ENCODE measurements at regions of chr5 and their contacts with region 1.

Region 1: DNA sequence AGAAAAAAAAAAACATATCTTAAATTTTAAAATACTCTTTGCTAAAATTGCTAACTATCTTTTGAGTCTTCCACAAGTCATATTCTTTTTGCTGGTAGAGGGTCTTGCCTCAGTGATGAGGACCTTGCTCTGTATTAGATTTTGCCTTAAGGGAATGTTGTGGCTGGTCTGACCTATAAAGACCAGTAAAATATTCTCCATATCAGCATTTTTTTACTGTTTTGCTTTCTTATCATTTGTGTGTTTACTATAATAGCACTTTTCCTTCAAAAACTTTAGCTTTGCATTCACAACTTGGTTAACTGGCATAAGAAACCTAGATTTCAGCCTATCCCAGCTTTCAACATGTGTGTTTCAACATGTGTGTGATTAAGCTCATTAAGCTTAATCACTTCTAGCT is 224.7 kb upstream of the CDH18 start:
- DNase-seq: no peak
- ATAC-seq: no peak
- H3K4me3 ChIP-seq: no peak overlapping the region
- H3K27ac ChIP-seq: no peak overlapping the region
- H3K4me1 ChIP-seq: no peaks in the 10 kb centered on the region
- H3K27me3 ChIP-seq: no peaks in the 10 kb centered on the region
- CTCF ChIP-seq: no peak
- POLR2A ChIP-seq: no peak

Region 2: DNA sequence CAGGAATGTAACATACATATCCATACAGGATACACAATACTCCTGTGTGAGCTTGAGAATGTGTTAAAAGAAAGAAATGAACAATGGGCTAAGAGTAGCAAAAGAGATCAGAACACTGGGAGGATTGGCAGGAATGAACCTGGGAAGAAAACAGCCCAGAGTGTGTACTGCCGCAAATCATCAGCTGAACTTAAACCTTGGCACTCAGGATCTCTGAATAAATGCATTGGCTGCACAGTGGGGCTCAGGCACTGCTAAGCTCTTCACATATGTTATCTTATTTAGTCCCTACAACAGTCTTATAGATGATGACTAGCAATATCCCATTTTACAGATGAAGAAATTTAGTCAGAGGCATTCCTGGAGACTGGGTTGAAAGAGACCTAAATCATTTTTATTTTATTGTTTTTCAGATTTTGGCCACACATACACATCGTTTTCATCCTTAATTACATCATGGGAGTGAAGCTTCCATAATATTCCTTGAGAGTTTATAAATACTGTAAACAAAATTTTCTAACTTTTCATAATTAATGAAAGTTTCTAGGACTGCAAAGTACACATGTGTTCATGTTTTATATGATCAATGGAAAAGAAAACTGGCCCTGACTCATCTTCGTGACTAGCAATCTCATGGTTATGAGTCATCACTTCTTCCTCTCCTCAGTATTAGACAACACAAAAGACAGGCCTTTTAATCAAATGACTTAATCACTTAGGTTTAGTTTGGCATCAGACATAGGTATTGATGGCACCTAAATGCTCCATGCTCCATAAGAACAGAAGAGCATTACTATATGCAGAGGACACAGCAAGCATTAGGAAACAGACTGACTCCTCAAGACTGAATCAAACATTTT is 283.9 kb before region 1 on chr5:
- in situ Hi-C with region 1: no loop called
- intact Hi-C with region 1: no loop called
- DNase-seq: no peak
- ATAC-seq: no peak
- H3K4me3 ChIP-seq: no peak overlapping the region
- H3K27ac ChIP-seq: no peak overlapping the region
- H3K4me1 ChIP-seq: no peaks in the 10 kb centered on the region
- H3K27me3 ChIP-seq: no peaks in the 10 kb centered on the region
- CTCF ChIP-seq: no peak
- POLR2A ChIP-seq: no peak

Region 3: GRCh38 chr5:20224966-20225365 is 12.3 kb after region 1 on chr5:
- in situ Hi-C with region 1: no loop called
- intact Hi-C with region 1: loop called (anchors 1 kb)
- DNase-seq: no peak
- ATAC-seq: no peak
- H3K4me3 ChIP-seq: no peak overlapping the region
- H3K27ac ChIP-seq: no peak overlapping the region
- H3K4me1 ChIP-seq: no peaks in the 10 kb centered on the region
- H3K27me3 ChIP-seq: no peaks in the 10 kb centered on the region
- CTCF ChIP-seq: no peak
- POLR2A ChIP-seq: no peak

Region 4: DNA sequence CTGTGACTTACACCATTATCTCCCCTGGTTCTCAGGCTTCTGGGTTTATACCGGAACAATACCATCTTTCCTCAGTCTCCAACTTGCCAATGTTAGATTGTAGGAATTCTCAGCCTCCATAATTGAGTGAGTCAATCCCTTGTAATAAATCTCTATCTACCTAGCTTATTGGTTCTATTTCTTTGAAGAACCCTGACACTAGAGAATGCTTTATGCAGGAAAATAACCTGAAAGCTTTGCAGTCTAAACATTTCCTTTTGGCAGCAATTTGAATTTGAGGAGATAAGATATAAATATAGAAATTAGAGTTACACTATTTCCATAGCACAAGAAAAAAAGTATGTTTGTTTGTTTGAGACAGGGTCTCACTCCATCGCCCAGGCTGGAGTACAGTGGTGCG is 53.4 kb after region 1 on chr5:
- in situ Hi-C with region 1: no loop called
- intact Hi-C with region 1: no loop called
- DNase-seq: no peak
- ATAC-seq: no peak
- H3K4me3 ChIP-seq: no peak overlapping the region
- H3K27ac ChIP-seq: no peak overlapping the region
- H3K4me1 ChIP-seq: no peaks in the 10 kb centered on the region
- H3K27me3 ChIP-seq: no peaks in the 10 kb centered on the region
- CTCF ChIP-seq: no peak
- POLR2A ChIP-seq: no peak